Endothelial cell of umbilical vein (primary cell): ENCODE measurements at regions of chr16 and their contacts with region 1.

Region 1: DNA sequence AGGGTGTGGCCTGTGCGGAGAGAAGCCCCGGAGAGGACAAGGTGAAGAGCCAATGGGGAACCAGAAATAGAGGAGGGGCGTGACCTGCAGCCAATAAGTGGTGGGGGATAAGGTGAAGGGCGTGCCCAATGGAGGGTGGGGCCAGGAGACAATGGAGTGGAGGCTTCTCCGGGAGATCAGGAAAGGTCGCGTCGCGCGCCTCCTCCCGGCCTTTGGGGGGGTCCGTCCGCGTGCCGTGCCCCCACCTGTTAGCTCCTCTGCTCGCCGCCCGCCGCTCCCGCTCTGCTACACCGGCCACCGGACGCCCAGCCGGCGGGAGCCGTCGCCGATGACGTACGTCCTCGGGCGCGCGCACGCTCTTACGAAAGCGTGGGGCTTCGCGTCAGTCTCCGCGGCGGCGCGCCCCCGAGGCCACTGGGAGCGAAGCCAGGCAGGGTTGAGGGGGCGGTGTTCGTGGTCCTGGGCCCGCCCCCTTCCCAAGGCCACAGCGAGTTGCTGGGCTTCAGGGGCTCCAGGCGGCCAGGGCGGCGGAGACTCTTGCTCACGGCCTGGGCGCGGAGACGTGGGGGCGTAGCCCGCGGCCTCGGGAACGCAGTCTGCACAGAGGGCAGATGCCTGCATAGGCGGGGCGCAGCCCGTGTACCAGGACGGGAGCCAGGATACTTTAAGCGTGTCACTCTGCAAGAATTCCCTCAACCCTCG is at the start of gene MATCAP1:
- DNase-seq: peak; percentile 98
- H3K4me3 ChIP-seq: peak within 1 kb of the TSS; percentile 75 to 90 (median 88)
- H3K27ac ChIP-seq: peak within 1 kb of the TSS; percentile 95
- H3K4me1 ChIP-seq: peaks cover 33% of the 10 kb centered on the region
- H3K27me3 ChIP-seq: no peaks in the 10 kb centered on the region
- CTCF ChIP-seq: no peak
- POLR2A ChIP-seq: peak; percentile 70
- total RNA-seq, gene MATCAP1: 45.8 and 53.3 TPM in 2 replicates

Region 2: DNA sequence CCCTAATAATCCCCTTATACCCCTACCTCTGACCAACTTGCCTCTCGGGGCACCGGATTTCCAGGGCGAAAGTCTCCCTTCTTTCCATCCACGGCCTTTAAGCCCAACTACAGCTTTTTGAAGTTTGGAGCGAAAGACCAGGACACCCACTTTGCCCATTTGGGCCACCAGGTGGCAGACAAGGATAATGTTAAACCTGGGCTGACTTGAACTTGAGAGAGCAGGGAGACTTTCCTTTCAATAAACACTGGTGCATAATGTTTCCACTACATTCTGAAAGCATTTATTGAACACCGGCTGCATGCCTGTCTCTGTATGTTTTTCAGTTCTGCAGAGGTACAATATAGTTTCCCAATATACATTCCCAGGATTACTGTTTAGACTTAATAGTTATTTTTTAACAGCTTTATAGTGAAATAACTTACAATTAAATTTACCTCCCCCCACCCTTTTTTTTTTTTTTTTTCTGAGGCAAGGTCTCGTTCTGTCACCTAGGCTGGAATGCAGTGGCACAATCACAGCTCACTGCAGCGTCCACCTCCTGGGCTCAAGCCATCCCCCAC is 229.6 kb before region 1 on chr16:
- CTCF ChIA-PET with region 1: interaction called, 26 read pairs
- POLR2A ChIA-PET with region 1: no interaction called
- dilution Hi-C with region 1: no loop called
- intact Hi-C with region 1: loop called (anchors 1 kb)
- DNase-seq: peak; percentile 78
- H3K4me3 ChIP-seq: no peak overlapping the region
- H3K27ac ChIP-seq: no peak overlapping the region
- H3K4me1 ChIP-seq: no peaks in the 10 kb centered on the region
- H3K27me3 ChIP-seq: peaks cover 3 to 5% of the 10 kb centered on the region in 2 experiments
- CTCF ChIP-seq: peak; percentile 78 to 85
- POLR2A ChIP-seq: no peak

Region 3: DNA sequence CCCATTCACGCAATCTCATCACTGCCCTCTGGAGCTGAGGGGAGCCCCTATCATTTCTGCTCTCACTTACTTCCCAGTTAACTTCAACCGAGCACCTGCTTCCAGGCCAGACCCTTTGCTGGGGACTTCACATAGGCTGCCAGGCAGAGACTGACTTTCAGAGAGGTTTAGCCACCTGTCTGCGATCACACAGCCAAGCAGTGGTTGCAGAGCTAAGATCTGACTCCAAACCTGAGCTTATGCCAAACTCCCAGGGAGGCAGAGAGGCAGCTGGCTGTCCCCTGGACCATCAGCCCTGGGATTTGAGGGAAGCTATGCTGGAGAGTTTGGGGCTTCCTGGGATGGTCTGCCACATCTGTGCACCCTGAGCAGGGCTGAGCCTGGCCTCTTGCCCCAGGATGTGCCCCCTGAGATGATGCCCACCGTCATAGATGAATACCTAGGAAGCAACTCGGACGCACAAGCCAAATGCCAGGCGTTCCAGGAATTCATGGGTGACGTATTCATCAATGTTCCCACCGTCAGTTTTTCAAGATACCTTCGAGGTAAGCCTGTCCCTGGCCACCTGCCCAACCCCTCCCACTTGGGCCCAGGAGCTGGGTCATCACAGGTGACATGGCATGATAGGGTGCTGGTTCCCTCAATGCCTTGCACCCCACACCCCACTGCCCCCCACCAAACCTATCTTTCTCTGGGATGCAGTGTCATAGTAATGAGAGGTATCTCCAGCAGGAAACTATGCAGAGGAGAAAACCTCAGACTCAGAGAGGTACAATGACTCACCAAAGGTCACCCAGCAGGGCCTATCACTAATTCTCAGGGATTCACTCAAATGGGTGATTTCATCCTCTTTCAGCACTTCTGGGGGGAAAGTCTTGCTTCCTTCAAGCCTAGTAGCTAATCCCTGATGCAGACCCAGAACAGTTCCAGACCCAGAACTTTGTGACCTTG is 212.7 kb before region 1 on chr16:
- CTCF ChIA-PET with region 1: interaction called, 17 read pairs
- POLR2A ChIA-PET with region 1: no interaction called
- dilution Hi-C with region 1: no loop called
- intact Hi-C with region 1: no loop called
- DNase-seq: no peak
- H3K4me3 ChIP-seq: no peak overlapping the region
- H3K27ac ChIP-seq: no peak overlapping the region
- H3K4me1 ChIP-seq: no peaks in the 10 kb centered on the region
- H3K27me3 ChIP-seq: peaks cover 2 to 3% of the 10 kb centered on the region in 2 experiments
- CTCF ChIP-seq: no peak
- POLR2A ChIP-seq: no peak

Region 4: DNA sequence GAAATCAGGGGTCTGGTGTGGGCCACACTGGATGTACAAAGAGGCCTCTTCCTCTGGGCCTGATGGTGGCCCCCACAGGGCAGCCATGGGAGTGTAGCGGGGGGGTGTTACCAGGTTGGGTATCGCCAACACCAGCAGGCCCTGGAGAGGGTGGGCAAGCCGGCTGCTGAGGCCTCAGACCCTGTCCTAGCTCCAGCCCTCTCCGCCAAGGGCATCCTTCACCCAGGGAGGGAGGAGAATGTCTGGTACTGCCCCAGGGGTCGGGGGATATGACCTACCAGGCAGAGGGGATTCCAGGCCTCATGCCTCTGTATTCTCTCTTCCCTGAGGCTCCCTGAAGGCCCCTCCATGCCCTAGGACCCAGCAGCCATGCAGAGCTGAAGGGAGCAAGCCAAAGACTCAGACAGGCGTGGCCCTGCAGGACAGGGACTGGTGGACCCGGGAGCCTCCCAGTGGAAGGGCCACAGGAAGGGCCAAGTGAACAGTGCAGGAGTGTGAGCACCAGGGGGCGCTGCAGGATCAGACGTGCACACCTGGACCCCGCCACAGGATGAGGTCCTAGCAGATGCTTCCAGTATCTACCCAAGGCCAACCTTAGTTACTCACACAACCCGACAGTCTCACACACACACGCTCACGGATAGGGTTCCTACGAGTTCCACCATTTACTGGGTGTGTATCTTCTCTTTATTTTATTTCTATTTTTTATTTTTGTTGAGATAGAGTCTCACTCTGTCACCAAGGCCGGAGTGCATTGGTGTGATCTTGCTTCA is 206.3 kb before region 1 on chr16:
- CTCF ChIA-PET with region 1: interaction called, 17 read pairs
- POLR2A ChIA-PET with region 1: no interaction called
- dilution Hi-C with region 1: no loop called
- intact Hi-C with region 1: loop called (anchors 1 kb)
- DNase-seq: peak; percentile 60
- H3K4me3 ChIP-seq: no peak overlapping the region
- H3K27ac ChIP-seq: no peak overlapping the region
- H3K4me1 ChIP-seq: no peaks in the 10 kb centered on the region
- H3K27me3 ChIP-seq: no peaks in the 10 kb centered on the region
- CTCF ChIP-seq: peak; percentile 86 to 89
- POLR2A ChIP-seq: no peak

Region 5: DNA sequence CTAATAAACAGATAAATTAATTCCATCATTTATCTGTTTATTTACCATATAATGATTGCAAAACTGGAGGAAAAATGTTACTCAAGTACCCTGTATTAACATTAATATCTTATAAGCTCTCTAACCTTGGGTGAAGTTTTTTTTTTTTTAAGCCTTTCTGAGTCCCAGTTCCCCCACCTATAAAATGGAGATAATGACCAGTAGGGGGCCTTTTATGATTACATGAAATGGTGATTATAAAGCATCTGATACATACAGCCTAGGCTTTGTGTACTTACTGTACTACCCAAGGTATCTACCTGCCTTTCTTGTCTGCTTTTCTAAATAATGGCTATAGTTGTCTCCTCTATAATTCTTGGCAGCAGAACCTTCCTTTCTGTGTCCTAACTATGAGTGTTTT is 165.4 kb after region 1 on chr16:
- CTCF ChIA-PET with region 1: no interaction called
- POLR2A ChIA-PET with region 1: no interaction called
- dilution Hi-C with region 1: no loop called
- intact Hi-C with region 1: no loop called
- DNase-seq: peak; percentile 59
- H3K4me3 ChIP-seq: no peak overlapping the region
- H3K27ac ChIP-seq: no peak overlapping the region
- H3K4me1 ChIP-seq: peaks cover 23% of the 10 kb centered on the region
- H3K27me3 ChIP-seq: no peaks in the 10 kb centered on the region
- CTCF ChIP-seq: peak; percentile 32 to 49
- POLR2A ChIP-seq: no peak